ENCODE measurements at regions of chr3 and their contacts with region 1.

Region 1: DNA sequence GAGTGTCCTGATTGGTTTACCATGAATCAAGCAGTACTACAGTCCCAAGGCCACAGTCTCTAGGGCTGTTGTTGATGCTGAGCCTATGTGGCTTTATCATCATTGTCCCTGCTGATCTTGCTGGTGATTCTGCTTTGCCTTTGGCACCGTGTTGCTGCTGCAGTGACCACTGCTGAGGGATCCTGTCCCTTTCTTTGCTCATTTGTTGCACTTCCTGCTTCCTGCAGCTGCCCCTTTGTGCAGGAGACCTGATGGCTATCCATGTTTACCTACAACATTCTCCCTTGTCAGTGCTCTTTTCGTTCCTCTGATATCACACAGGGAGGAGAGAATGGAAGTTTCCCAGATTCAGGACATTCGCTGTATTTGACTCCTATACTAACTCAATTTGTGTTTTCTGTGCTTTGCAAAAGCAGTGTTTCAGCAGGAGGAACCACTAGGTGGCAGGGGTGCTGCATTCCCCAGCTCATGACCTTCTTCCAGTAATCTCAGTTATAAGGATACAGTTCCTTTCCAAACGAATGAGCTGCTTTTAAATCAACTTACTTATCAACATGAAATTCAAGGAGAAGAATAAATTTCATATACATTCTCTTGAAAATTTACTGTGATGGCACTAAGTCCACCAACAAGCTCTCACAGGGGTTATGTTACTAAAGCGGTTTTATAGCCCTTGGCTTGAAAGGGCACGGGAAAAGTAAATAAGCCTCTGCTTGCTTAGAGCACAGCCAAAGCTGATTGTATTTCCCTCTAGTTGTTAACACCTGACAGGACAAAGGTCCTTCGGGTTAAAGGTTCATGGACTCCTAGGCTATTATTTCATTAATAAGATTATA is 9.7 kb upstream of the THUMPD3 start:
- DNase-seq: peak; percentile 19
- ATAC-seq: peak; percentile 53
- H3K4me3 Mint-ChIP-seq: no peak overlapping the region
- H3K27ac Mint-ChIP-seq: no peak overlapping the region
- H3K4me1 Mint-ChIP-seq: peaks cover 28% of the 10 kb centered on the region
- H3K27me3 Mint-ChIP-seq: no peaks in the 10 kb centered on the region
- CTCF ChIP-seq: peak; percentile 47

Region 2: DNA sequence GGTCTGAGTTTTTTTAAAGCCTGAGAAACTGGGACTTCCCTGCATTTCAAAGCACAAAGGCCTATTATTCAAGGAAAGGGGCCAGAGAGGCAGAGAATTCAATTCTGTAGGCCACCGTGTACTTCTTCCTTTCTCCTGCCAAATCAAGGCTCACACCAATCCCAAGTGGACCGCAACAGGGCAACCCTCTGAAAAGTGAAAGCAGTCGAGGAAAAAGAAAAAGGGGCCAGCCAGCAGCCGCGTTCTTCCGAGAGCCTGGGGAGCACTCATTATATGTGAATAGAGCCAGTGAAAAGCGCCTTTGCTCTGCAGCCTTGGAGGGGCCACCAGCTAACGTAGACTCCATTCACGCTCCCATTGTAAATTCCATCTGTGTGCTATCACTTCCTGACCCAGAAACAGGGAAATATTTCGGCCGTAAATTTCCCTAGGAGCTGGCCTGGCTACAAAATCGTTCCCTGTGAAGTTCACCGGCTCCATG is 36.2 kb before region 1 on chr3:
- CTCF ChIA-PET with region 1: no interaction called
- POLR2A ChIA-PET with region 1: no interaction called
- intact Hi-C with region 1: no loop called
- DNase-seq: no peak
- ATAC-seq: no peak
- H3K4me3 Mint-ChIP-seq: no peak overlapping the region
- H3K27ac Mint-ChIP-seq: no peak overlapping the region
- H3K4me1 Mint-ChIP-seq: no peaks in the 10 kb centered on the region
- H3K27me3 Mint-ChIP-seq: peaks cover 17% of the 10 kb centered on the region
- CTCF ChIP-seq: no peak

Region 3: GRCh38 chr3:9422712-9423424 is 69.7 kb after region 1 on chr3:
- CTCF ChIA-PET with region 1: interaction called, 4 read pairs
- POLR2A ChIA-PET with region 1: interaction called, 3 read pairs
- intact Hi-C with region 1: loop called (anchors 1 kb)
- DNase-seq: no peak
- ATAC-seq: peak; percentile 28
- H3K4me3 Mint-ChIP-seq: no peak overlapping the region
- H3K27ac Mint-ChIP-seq: peak overlapping the region; percentile 46
- H3K4me1 Mint-ChIP-seq: peaks cover 24% of the 10 kb centered on the region
- H3K27me3 Mint-ChIP-seq: no peaks in the 10 kb centered on the region
- CTCF ChIP-seq: no peak

Region 4: DNA sequence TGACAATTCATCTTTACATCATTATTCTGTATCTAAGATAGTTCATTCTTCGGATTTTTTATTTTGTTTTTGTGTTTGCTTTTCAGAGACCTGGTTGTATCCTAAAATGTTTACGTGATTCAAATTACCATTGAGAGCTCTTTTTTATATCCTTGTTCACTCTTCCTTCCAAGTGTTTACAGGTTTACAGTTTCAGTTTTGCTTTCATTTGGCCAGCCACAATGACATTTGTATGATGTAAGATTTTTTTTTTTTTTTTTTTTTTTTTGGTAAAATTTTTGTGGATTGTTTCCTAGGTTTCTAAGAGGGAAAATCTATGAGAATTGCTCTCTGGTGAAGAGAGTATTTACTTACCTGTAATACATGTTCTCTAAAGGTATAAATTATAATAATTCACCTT is 99.3 kb after region 1 on chr3:
- CTCF ChIA-PET with region 1: interaction called, 3 read pairs
- POLR2A ChIA-PET with region 1: no interaction called
- intact Hi-C with region 1: loop called (anchors 5 kb)
- DNase-seq: no peak
- ATAC-seq: no peak
- H3K4me3 Mint-ChIP-seq: no peak overlapping the region
- H3K27ac Mint-ChIP-seq: peak overlapping the region; percentile 32
- H3K4me1 Mint-ChIP-seq: peaks cover 7% of the 10 kb centered on the region
- H3K27me3 Mint-ChIP-seq: no peaks in the 10 kb centered on the region
- CTCF ChIP-seq: no peak